ENCODE measurements at regions of chr10 and their contacts with region 1.

Region 1: DNA sequence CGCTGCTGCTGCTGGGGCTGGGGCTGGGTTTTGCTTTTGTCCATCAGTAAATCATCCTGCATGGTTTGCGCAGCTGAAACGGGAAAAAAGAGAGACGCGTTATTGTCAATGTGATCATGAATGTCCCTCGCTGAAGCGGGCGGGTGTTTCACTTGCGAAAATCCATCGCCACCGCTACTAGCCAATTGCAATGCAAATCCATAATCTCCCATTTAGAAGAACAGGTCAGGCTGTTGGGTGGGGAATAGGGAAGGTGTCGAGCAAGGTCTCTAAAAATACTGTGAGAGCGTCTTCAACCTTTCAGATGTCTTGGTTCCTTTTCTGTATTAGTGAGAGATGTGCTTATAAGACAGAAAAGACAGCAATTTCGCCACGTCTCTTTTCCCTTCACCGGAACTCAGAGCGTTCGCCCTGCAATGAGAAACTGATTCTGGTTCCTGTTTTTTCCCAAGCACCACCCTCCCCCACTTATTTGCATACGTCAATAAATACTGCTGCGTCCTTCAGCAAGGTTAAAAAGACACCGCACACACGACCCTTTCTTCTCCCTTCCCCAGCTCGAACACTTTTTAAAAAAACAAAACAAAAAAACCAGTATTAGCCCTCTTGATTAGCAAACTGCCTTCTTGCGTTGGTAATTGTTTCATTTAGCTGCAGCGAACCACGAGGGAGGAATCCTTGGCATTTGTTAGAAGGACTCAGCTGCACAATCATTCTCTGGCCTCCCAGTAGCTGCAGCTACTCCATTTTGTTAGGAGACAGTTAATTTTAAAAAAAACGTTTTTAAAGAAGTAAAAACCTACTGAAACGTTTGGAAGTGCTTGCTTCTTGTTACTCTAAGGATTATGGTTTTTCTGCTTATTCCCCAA is 50.4 kb downstream of the CPEB3 start:
- DNase-seq: peak; percentile 75
- H3K4me3 Mint-ChIP-seq: peak overlapping the region; percentile 76
- H3K27ac Mint-ChIP-seq: peak overlapping the region; percentile 14
- H3K4me1 Mint-ChIP-seq: peaks cover 35% of the 10 kb centered on the region
- H3K27me3 Mint-ChIP-seq: no peaks in the 10 kb centered on the region
- CTCF ChIP-seq: no peak

Region 2: GRCh38 chr10:92087750-92088395 is 152.7 kb before region 1 on chr10:
- CTCF ChIA-PET with region 1: interaction called, 10 read pairs
- POLR2A ChIA-PET with region 1: interaction called, 12 read pairs
- intact Hi-C with region 1: loop called (anchors 1 kb)
- DNase-seq: peak; percentile 89
- H3K4me3 Mint-ChIP-seq: no peak overlapping the region
- H3K27ac Mint-ChIP-seq: no peak overlapping the region
- H3K4me1 Mint-ChIP-seq: peaks cover 6% of the 10 kb centered on the region
- H3K27me3 Mint-ChIP-seq: no peaks in the 10 kb centered on the region
- CTCF ChIP-seq: peak; percentile 94

Region 3: GRCh38 chr10:92124616-92125143 is 115.8 kb before region 1 on chr10:
- CTCF ChIA-PET with region 1: interaction called, 4 read pairs
- POLR2A ChIA-PET with region 1: interaction called, 17 read pairs
- intact Hi-C with region 1: no loop called
- DNase-seq: peak; percentile 94
- H3K4me3 Mint-ChIP-seq: no peak overlapping the region
- H3K27ac Mint-ChIP-seq: no peak overlapping the region
- H3K4me1 Mint-ChIP-seq: peaks cover 26% of the 10 kb centered on the region
- H3K27me3 Mint-ChIP-seq: no peaks in the 10 kb centered on the region
- CTCF ChIP-seq: no peak

Region 4: GRCh38 chr10:92208736-92209327 is 31.7 kb before region 1 on chr10:
- CTCF ChIA-PET with region 1: interaction called, 12 read pairs
- POLR2A ChIA-PET with region 1: interaction called, 62 read pairs
- intact Hi-C with region 1: loop called (anchors 1 kb)
- DNase-seq: no peak
- H3K4me3 Mint-ChIP-seq: no peak overlapping the region
- H3K27ac Mint-ChIP-seq: no peak overlapping the region
- H3K4me1 Mint-ChIP-seq: peaks cover 11% of the 10 kb centered on the region
- H3K27me3 Mint-ChIP-seq: no peaks in the 10 kb centered on the region
- CTCF ChIP-seq: no peak

Region 5: DNA sequence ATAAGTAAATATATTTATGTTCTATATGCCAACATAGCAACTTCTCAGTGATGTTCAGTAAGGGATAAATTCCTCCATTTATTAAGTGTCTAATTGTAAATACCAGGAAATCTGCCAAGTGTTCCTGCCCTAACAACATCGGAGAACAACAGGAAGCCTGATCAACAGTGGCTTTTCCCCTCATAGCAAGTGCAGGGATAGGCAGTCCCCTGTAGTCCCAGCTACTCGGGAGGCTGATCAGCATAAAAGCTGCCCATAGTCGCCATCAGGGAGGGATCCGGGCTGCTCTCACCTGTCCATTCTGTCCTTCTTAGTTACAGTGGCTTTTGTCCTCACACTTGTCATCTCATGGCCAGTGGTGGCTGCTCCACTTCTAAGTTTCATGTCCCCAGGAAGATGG is 192.1 kb after region 1 on chr10:
- CTCF ChIA-PET with region 1: interaction called, 3 read pairs
- POLR2A ChIA-PET with region 1: no interaction called
- intact Hi-C with region 1: loop called (anchors 1 kb)
- DNase-seq: no peak
- H3K4me3 Mint-ChIP-seq: no peak overlapping the region
- H3K27ac Mint-ChIP-seq: no peak overlapping the region
- H3K4me1 Mint-ChIP-seq: no peaks in the 10 kb centered on the region
- H3K27me3 Mint-ChIP-seq: no peaks in the 10 kb centered on the region
- CTCF ChIP-seq: no peak

Measured in MCF 10A (cell line).